Naive thymus-derived CD4-positive, alpha-beta T cell (primary cell): ENCODE measurements at regions of chr10 and their contacts with region 1.

Region 1: DNA sequence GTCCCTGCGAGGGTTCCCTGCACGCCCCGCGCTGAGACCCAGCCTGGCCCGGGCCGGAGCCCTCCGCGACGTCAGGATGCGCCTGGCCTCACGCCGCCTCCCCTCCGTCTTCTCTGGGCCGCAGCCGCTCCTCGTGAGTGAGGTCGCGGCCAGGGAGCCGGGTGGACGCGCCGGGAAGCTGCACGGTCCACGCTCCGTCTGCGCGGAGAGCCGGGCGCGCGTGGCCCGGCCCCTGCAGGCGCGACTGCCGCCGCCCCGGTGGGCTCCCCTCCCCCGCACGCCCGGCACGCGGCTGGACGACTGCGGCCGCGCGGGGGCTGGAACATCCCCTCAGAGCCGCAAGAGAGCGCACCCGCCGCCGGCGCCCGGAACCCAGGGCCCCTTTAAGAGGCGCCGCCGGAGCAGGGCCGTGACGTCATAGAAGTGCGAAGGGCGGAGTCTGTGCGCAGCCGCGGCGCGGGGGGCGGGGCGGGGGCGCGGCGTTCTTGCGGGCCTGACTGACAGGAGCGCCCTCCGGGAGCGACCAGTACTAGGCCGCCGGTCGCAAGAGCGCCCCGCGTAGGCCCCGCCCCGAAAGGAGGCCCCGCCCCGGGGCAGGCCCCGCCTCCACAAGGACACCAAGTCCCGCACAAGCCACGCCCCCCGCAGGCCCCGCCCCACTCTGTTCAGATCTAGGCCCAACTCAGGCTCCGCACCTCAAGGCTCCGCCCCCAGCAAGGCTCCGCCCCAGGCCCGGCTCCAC is 445 bp upstream of the INPP5A start:
- DNase-seq: peak; percentile 100
- ATAC-seq: peak; percentile 94
- H3K4me3 ChIP-seq: peak overlapping the region; percentile 57
- H3K4me3 Mint-ChIP-seq: peak overlapping the region; percentile 66 to 98 (median 78)
- H3K27ac ChIP-seq: peak overlapping the region; percentile 81
- H3K27ac Mint-ChIP-seq: peak overlapping the region in 3 of 9 donors; percentile 72 to 78 (median 76)
- H3K4me1 ChIP-seq: peaks cover 11 to 41% of the 10 kb centered on the region in 2 donors
- H3K4me1 Mint-ChIP-seq: peaks cover 33 to 53% (median 42%) of the 10 kb centered on the region in 7 donors
- H3K27me3 ChIP-seq: no peaks in the 10 kb centered on the region
- H3K27me3 Mint-ChIP-seq: peaks cover 0 to 27% (median 0%) of the 10 kb centered on the region in 5 donors

Region 2: DNA sequence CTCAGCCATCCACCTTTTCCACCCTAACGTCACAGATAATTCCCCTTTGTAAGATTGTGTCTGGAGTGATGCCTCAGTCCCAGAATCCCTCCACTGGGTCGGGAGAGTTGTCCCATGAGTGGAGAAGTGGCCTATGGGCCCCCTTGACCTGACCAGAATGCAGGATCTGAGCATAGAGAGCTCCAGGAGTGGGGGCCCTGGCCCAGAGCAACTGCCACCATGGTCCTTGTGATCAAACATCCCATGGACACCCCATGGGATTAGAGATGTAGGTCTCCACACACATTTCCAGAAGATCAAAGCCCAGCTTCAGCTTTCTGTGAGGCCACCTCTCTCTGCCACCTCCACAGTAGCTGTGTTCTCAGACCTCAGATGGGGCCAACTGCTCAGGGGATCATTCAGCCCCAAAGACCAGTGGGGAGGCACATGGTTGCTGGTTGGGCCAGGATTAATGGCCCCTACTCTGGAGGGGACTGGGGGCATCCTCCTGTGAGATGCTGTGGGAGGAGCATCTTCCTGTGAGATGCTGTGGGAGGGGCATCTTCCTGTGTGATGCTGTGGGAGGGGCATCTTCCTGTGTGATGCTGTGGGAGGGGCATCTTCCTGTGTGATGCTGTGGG is 378.9 kb before region 1 on chr10:
- CTCF ChIA-PET with region 1: no interaction called
- POLR2A ChIA-PET with region 1: no interaction called
- intact Hi-C with region 1: loop called (anchors 1 to 5 kb)
- DNase-seq: peak in 8 of 9 donors; percentile 51 to 71 (median 65)
- ATAC-seq: peak; percentile 58
- H3K4me3 ChIP-seq: no peak overlapping the region
- H3K4me3 Mint-ChIP-seq: peak overlapping the region in 4 of 10 donors; percentile 14 to 64 (median 30)
- H3K27ac ChIP-seq: peak overlapping the region; percentile 72
- H3K27ac Mint-ChIP-seq: peak overlapping the region in 8 of 9 donors; percentile 76 to 100 (median 95)
- H3K4me1 ChIP-seq: peaks cover 23 to 32% of the 10 kb centered on the region in 2 donors
- H3K4me1 Mint-ChIP-seq: peaks cover 13 to 46% (median 34%) of the 10 kb centered on the region in 7 donors
- H3K27me3 ChIP-seq: no peaks in the 10 kb centered on the region
- H3K27me3 Mint-ChIP-seq: no peaks in the 10 kb centered on the region

Region 3: GRCh38 chr10:132331526-132332432 is 205.4 kb before region 1 on chr10 and contains the start of gene LRRC27:
- CTCF ChIA-PET with region 1: no interaction called
- POLR2A ChIA-PET with region 1: no interaction called
- intact Hi-C with region 1: loop called (anchors 1 kb)
- DNase-seq: peak; percentile 99 to 100 (median 100)
- ATAC-seq: peak; percentile 93
- H3K4me3 ChIP-seq: peak within 1 kb of the TSS; percentile 96
- H3K4me3 Mint-ChIP-seq: peak within 1 kb of the TSS; percentile 86 to 96 (median 90)
- H3K27ac ChIP-seq: peak within 1 kb of the TSS; percentile 84
- H3K27ac Mint-ChIP-seq: peak within 1 kb of the TSS; percentile 86 to 97 (median 95)
- H3K4me1 ChIP-seq: peaks cover 11 to 24% of the 10 kb centered on the region in 2 donors
- H3K4me1 Mint-ChIP-seq: peaks cover 45 to 77% (median 66%) of the 10 kb centered on the region in 7 donors
- H3K27me3 ChIP-seq: no peaks in the 10 kb centered on the region
- H3K27me3 Mint-ChIP-seq: peaks cover 0 to 7% (median 0%) of the 10 kb centered on the region in 5 donors
- total RNA-seq, gene LRRC27: 3.4 to 10.8 (median 7.1) TPM

Region 4: GRCh38 chr10:132551093-132551807 is 14.1 kb after region 1 on chr10:
- CTCF ChIA-PET with region 1: interaction called, 8 read pairs
- POLR2A ChIA-PET with region 1: interaction called, 26 read pairs
- intact Hi-C with region 1: loop called (anchors 1 kb)
- DNase-seq: peak in 4 of 9 donors; percentile 41 to 53 (median 50)
- ATAC-seq: peak; percentile 67
- H3K4me3 ChIP-seq: peak overlapping the region; percentile 51
- H3K4me3 Mint-ChIP-seq: peak overlapping the region in 9 of 10 donors; percentile 72 to 88 (median 80)
- H3K27ac ChIP-seq: peak overlapping the region; percentile 57
- H3K27ac Mint-ChIP-seq: peak overlapping the region; percentile 66 to 95 (median 79)
- H3K4me1 ChIP-seq: peaks cover 18 to 52% of the 10 kb centered on the region in 2 donors
- H3K4me1 Mint-ChIP-seq: peaks cover 29 to 51% (median 34%) of the 10 kb centered on the region in 7 donors
- H3K27me3 ChIP-seq: no peaks in the 10 kb centered on the region
- H3K27me3 Mint-ChIP-seq: no peaks in the 10 kb centered on the region

Region 5: GRCh38 chr10:132627666-132628531 is 90.8 kb after region 1 on chr10:
- CTCF ChIA-PET with region 1: interaction called, 4 read pairs
- POLR2A ChIA-PET with region 1: no interaction called
- intact Hi-C with region 1: loop called in 1 of 2 experiments (anchors 2 kb)
- DNase-seq: peak in 1 of 9 donors; percentile 11
- ATAC-seq: peak; percentile 52
- H3K4me3 ChIP-seq: no peak overlapping the region
- H3K4me3 Mint-ChIP-seq: peak overlapping the region in 7 of 10 donors; percentile 21 to 65 (median 25)
- H3K27ac ChIP-seq: no peak overlapping the region
- H3K27ac Mint-ChIP-seq: peak overlapping the region in 7 of 9 donors; percentile 36 to 87 (median 72)
- H3K4me1 ChIP-seq: peaks cover 0 to 7% of the 10 kb centered on the region in 2 donors
- H3K4me1 Mint-ChIP-seq: peaks cover 16 to 65% (median 48%) of the 10 kb centered on the region in 7 donors
- H3K27me3 ChIP-seq: no peaks in the 10 kb centered on the region
- H3K27me3 Mint-ChIP-seq: no peaks in the 10 kb centered on the region

Region 6: GRCh38 chr10:133373104-133373624 is 836.0 kb after region 1 on chr10 and contains the start of gene ECHS1:
- CTCF ChIA-PET with region 1: no interaction called
- POLR2A ChIA-PET with region 1: no interaction called
- intact Hi-C with region 1: loop called (anchors 5 to 10 kb)
- DNase-seq: peak; percentile 81 to 99 (median 90)
- ATAC-seq: peak; percentile 99
- H3K4me3 ChIP-seq: peak within 1 kb of the TSS; percentile 68
- H3K4me3 Mint-ChIP-seq: peak within 1 kb of the TSS; percentile 57 to 92 (median 81)
- H3K27ac ChIP-seq: peak within 1 kb of the TSS; percentile 82
- H3K27ac Mint-ChIP-seq: peak within 1 kb of the TSS; percentile 14 to 83 (median 67)
- H3K4me1 ChIP-seq: peaks cover 0 to 3% of the 10 kb centered on the region in 2 donors
- H3K4me1 Mint-ChIP-seq: peaks cover 0 to 21% (median 12%) of the 10 kb centered on the region in 7 donors
- H3K27me3 ChIP-seq: no peaks in the 10 kb centered on the region
- H3K27me3 Mint-ChIP-seq: peaks cover 0 to 14% (median 0%) of the 10 kb centered on the region in 5 donors
- total RNA-seq, gene ECHS1: 17.5 to 39.8 (median 28.9) TPM